HAP-1 (cell line): ENCODE measurements at regions of chr4 and their contacts with region 1.

Region 1: DNA sequence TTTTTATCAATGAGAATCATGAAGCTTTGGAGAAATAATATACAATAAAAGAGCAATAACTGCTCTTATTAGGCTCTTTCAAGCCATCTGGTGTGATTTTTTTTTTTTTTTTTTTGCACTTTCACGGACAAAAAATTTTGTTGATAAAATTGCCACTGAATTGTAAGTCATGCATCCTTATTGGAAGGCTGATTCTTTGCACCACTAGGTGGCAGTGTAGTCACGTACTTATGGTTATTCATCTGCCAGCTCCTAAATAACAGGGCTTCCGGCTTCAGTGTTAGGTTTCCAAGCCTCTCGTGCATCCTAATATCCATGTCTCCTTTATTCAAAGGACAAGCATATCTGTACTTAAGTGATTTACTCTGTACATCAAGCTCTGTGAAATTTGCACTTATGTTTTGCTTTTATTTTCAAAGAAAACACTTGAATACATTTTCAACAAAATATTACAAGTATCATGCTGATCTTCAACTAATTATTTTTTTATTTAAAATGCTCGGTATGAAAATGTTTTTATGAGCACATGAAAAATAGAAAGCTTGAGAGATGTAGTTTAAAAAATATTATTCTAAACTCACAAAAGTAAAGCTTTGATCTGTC is 1578.3 kb upstream of the TENM3 start:
- DNase-seq: peak; percentile 77 to 89
- H3K4me3 ChIP-seq: no peak overlapping the region
- H3K4me1 ChIP-seq: no peaks in the 10 kb centered on the region; the same call in 1 of the 2 replicates
- H3K27me3 ChIP-seq: no peaks in the 10 kb centered on the region

Region 2: DNA sequence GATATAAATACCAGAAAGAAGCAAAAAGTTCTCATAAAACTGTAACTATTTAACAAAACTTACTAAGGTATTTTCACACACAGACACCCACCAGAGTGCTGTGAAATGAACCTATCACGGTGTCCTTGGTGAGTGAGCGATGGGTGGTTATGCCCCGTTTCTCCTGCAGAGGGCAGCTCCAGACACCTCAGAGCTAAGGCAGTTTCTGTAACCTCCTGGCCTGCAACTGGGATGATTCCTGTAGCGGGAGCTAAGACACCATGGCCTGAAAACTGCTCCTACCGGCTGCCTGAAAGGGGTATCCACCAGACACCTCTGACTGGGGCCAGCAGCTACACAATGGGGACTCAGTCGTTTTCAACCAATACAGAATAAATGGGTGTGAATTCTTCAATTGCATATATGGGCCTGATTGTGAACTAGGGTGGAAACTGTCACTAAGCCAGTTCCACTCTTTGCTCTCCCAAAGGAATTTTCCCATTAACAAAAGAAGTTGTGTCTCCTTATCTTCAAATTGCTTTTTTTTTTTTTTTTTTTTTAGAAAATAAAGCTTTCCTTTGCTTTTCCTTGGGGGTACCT is 797.5 kb before region 1 on chr4:
- in situ Hi-C with region 1: loop called (anchors 25 kb)
- DNase-seq: peak; percentile 81 to 88
- H3K4me3 ChIP-seq: no peak overlapping the region
- H3K4me1 ChIP-seq: no peaks in the 10 kb centered on the region
- H3K27me3 ChIP-seq: no peaks in the 10 kb centered on the region

Region 3: DNA sequence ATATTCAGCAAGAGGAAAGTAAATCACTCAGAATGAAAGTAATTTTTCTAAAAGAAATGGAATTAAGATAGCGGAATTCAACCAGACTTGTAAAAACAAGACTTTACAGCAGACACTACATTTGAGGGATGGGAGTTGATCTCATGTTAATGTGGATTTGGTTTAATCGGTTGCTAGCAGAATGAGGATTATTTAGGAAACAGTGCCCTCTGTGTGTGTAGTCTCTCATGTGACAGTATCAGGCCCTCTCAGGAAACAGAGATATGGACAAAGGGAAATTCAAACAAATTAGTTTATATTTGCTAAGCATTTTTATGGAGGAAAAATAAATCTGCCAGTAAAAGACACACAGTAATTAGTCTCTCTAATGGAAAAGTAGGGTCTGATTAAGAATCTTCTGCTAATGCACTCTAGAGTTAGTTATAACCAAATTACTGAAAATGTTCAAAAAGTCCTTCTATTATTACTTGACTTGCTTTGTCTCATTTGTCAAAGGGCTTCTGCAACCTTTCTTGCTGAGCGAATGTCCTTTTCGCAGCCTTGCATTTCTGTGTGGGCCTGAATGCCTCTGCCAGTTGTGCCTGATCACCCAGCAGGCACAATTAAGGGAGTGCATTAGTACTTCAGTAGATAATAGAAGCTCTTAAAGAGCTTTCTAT is 296.0 kb after region 1 on chr4:
- in situ Hi-C with region 1: loop called (anchors 25 kb)
- DNase-seq: peak; percentile 31 to 73
- H3K4me3 ChIP-seq: no peak overlapping the region
- H3K4me1 ChIP-seq: peaks cover 37% of the 10 kb centered on the region
- H3K27me3 ChIP-seq: no peaks in the 10 kb centered on the region

Region 4: DNA sequence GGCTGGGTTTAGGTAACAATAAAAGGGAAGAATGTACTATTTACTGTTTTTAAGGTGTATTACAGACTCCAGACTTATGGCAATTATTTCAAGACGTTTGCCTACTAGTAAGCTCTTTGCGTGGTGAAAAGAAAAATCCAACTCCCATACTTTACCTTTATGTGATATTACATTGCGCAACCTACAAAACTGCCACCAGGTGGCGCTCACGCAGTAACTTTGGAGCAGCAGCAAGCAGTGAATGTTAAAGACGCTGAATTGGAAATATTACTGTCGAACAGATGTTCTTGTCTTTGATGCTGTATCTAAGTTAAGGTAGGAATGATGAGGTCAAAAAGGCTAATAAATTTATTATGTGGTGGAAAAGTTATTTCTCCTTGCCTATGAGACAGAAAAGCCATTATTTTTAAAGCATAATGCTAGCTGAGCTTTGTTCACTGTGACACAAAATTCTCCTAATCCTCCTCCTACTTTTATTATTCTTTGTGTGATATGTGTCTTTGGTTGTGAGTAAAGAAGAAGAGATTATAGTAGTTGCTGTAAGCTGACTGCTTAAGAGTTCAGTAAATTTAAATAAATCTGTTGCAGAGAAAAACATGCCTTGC is 478.5 kb after region 1 on chr4:
- in situ Hi-C with region 1: loop called (anchors 25 kb)
- DNase-seq: peak; percentile 73 to 86
- H3K4me3 ChIP-seq: no peak overlapping the region
- H3K4me1 ChIP-seq: peaks cover 6% of the 10 kb centered on the region
- H3K27me3 ChIP-seq: peaks cover 5% of the 10 kb centered on the region; the same call in 1 of the 2 replicates

Region 5: DNA sequence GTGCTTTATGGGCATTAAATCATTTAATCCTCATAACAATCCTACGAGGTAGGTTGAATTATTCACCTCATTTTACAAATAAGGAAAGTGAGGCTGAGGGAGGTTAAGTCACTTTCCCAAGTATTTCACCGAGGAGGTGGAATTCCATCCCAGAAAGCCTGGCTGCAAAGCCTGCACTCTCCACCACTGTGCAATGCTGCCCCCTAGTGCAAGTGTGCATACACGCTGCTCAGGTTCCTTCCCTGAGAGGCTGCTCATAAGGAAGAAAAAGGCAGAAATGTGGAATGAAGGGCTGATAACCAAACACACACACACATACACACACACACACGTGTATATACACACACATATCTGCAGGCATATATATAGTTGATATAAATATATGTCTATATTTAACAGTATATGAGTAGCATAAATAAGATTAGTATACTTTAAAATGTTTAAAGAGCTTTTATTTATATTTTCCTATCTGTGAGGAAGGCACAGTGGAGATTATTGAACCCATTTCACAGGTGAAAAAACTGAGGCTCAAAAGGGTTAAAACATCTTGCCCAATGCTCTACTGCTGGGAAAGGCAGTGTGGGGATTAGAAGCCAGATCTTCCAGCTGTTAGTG is 863.8 kb after region 1 on chr4:
- in situ Hi-C with region 1: loop called (anchors 25 kb)
- DNase-seq: peak; percentile 81 to 91
- H3K4me3 ChIP-seq: no peak overlapping the region
- H3K4me1 ChIP-seq: peaks cover 3% of the 10 kb centered on the region
- H3K27me3 ChIP-seq: no peaks in the 10 kb centered on the region